CD8-positive, alpha-beta T cell (primary cell): ENCODE measurements at regions of chr19 and their contacts with region 1.

Region 1: DNA sequence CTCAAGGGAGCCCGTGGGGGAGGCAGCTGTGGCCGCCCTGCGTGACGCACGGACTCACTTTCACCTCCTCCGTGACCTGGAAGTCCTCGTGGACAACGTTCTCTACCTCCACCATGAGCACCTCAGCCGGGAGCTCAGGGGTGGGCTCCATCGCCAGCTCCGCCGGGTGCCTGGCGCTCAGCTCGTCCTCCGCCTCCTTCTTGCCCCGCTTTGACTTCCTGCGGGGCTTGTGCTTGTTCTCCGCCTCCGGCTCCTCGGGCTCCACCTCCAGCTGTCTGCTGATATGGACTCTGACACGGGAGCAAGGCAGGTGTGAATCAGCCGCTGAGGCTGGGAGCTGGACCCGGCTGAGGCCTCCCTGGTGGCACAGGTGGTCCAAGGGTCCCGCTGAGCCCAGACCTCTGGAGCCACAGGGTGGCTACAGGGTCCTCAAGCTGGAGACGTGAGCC is 8.2 kb downstream of the LONP1 start:
- DNase-seq: no peak
- ATAC-seq: no peak
- H3K4me3 ChIP-seq: no peak overlapping the region
- H3K4me3 Mint-ChIP-seq: no peak overlapping the region
- H3K27ac ChIP-seq: no peak overlapping the region
- H3K27ac Mint-ChIP-seq: no peak overlapping the region
- H3K4me1 ChIP-seq: no peaks in the 10 kb centered on the region
- H3K4me1 Mint-ChIP-seq: peaks cover 6% of the 10 kb centered on the region
- H3K27me3 ChIP-seq: no peaks in the 10 kb centered on the region
- H3K27me3 Mint-ChIP-seq: no peaks in the 10 kb centered on the region
- CTCF ChIP-seq: no peak

Region 2: GRCh38 chr19:5690125-5690954 is 21.4 kb before region 1 on chr19 and contains the start of gene RPL36:
- CTCF ChIA-PET with region 1: interaction called, 11 read pairs
- POLR2A ChIA-PET with region 1: interaction called, 3 read pairs
- intact Hi-C with region 1: no loop called
- DNase-seq: peak; percentile 95 to 100 (median 99)
- ATAC-seq: peak; percentile 63
- H3K4me3 ChIP-seq: peak within 1 kb of the TSS; percentile 84 to 96
- H3K4me3 Mint-ChIP-seq: peak within 1 kb of the TSS; percentile 91
- H3K27ac ChIP-seq: peak within 1 kb of the TSS; percentile 86 to 89
- H3K27ac Mint-ChIP-seq: peak within 1 kb of the TSS; percentile 93
- H3K4me1 ChIP-seq: peaks cover 26% of the 10 kb centered on the region
- H3K4me1 Mint-ChIP-seq: peaks cover 48% of the 10 kb centered on the region
- H3K27me3 ChIP-seq: no peaks in the 10 kb centered on the region
- H3K27me3 Mint-ChIP-seq: no peaks in the 10 kb centered on the region
- CTCF ChIP-seq: peak; percentile 96
- total RNA-seq, gene RPL36: 1,425 to 1,465 TPM